B cell (primary cell): ENCODE measurements at regions of chr19 and their contacts with region 1.

Region 1: GRCh38 chr19:16259385-16260159 is 61.9 kb downstream of the AP1M1 start:
- DNase-seq: peak; percentile 94
- ATAC-seq: peak; percentile 79
- H3K4me3 ChIP-seq: peak overlapping the region in 1 of 5 experiments; percentile 42
- H3K4me3 Mint-ChIP-seq: peak overlapping the region; percentile 78
- H3K27ac ChIP-seq: peak overlapping the region; percentile 87 to 89
- H3K27ac Mint-ChIP-seq: peak overlapping the region; percentile 95
- H3K4me1 ChIP-seq: peaks cover 75 to 94% of the 10 kb centered on the region in 2 donors
- H3K4me1 Mint-ChIP-seq: peaks cover 83% of the 10 kb centered on the region
- H3K27me3 ChIP-seq: no peaks in the 10 kb centered on the region
- H3K27me3 Mint-ChIP-seq: no peaks in the 10 kb centered on the region
- CTCF ChIP-seq: no peak

Region 2: DNA sequence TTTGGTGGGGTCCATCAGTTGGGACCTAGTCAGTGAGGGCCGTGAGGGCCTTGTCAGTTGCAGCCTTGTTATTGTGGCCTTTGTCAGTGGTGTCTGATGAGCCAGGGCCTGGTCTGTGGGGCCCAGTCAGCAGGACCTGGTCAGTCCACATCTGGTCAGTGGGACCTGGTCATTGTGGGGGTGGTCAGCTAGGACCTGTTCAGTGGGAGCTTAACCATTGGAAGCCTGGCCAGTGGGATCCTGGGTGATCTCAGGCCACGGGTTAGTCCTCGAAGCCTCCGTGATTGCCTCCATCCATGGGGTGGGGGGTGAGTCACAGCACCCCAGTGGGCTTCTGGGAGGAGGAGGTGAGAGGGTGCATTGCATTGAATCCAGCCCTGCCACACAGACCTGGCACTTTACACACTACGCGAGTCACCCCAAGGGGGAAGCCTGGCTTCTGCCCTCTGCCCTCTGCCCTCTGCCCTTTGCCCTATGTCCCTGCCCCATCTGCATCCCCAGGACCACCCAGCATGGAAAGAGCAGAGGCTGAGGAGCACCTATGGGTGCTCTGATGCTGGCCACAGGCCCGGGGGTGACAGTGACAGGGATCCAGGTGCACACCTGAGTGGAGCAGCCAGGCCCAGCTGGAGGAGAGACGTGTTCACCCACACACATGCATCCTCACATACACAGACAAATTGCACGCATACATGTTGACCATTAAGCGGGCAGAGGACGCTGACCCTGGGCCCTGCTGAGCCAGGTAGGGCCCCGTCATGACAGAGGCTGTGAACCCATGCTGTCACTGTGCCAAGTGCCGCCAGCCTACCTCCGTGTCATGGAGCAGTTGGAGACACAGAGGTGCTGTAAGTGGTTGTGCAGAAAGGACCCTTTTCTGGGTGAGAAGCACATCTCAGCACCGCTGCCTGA is 243.1 kb before region 1 on chr19:
- CTCF ChIA-PET with region 1: no interaction called
- POLR2A ChIA-PET with region 1: no interaction called
- intact Hi-C with region 1: no loop called
- DNase-seq: peak; percentile 4
- ATAC-seq: no peak
- H3K4me3 ChIP-seq: no peak overlapping the region
- H3K4me3 Mint-ChIP-seq: no peak overlapping the region
- H3K27ac ChIP-seq: no peak overlapping the region
- H3K27ac Mint-ChIP-seq: no peak overlapping the region
- H3K4me1 ChIP-seq: no peaks in the 10 kb centered on the region
- H3K4me1 Mint-ChIP-seq: no peaks in the 10 kb centered on the region
- H3K27me3 ChIP-seq: no peaks in the 10 kb centered on the region
- H3K27me3 Mint-ChIP-seq: no peaks in the 10 kb centered on the region
- CTCF ChIP-seq: no peak

Region 3: DNA sequence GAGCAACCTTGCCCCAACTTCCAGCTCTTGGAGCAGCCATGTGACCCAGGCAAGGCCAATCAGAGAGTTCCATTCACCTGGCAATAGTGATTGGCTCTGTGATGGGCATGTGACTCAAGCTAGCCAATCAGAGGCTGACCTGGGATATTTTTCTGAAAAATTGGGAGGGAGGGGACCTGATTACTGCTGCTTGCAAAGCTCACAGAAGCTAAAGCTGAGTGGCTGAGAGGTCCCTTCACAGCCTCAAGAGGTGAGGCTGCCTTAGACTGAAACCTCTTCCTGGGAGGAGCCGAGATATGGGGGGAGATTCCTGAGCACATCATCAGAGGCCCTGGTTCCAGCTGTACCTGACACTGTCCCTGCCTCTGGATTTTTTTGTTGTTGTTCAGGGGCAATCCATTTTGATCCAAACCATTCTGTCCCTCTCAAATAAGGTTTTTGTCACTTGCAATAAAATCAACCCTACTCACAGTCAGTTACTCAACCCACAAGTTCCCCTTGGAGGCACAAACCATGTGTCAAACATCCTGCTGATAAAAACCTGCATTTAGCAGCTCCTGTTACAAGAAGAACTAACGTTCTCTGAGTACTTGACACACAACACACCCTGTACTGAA is 91.0 kb before region 1 on chr19:
- CTCF ChIA-PET with region 1: no interaction called
- POLR2A ChIA-PET with region 1: no interaction called
- intact Hi-C with region 1: no loop called
- DNase-seq: no peak
- ATAC-seq: no peak
- H3K4me3 ChIP-seq: peak overlapping the region in 1 of 5 experiments; percentile 13
- H3K4me3 Mint-ChIP-seq: peak overlapping the region; percentile 19
- H3K27ac ChIP-seq: peak overlapping the region in 1 of 2 donors; percentile 32
- H3K27ac Mint-ChIP-seq: peak overlapping the region; percentile 46
- H3K4me1 ChIP-seq: peaks cover 15 to 28% of the 10 kb centered on the region in 2 donors
- H3K4me1 Mint-ChIP-seq: peaks cover 15% of the 10 kb centered on the region
- H3K27me3 ChIP-seq: no peaks in the 10 kb centered on the region
- H3K27me3 Mint-ChIP-seq: no peaks in the 10 kb centered on the region
- CTCF ChIP-seq: no peak

Region 4: DNA sequence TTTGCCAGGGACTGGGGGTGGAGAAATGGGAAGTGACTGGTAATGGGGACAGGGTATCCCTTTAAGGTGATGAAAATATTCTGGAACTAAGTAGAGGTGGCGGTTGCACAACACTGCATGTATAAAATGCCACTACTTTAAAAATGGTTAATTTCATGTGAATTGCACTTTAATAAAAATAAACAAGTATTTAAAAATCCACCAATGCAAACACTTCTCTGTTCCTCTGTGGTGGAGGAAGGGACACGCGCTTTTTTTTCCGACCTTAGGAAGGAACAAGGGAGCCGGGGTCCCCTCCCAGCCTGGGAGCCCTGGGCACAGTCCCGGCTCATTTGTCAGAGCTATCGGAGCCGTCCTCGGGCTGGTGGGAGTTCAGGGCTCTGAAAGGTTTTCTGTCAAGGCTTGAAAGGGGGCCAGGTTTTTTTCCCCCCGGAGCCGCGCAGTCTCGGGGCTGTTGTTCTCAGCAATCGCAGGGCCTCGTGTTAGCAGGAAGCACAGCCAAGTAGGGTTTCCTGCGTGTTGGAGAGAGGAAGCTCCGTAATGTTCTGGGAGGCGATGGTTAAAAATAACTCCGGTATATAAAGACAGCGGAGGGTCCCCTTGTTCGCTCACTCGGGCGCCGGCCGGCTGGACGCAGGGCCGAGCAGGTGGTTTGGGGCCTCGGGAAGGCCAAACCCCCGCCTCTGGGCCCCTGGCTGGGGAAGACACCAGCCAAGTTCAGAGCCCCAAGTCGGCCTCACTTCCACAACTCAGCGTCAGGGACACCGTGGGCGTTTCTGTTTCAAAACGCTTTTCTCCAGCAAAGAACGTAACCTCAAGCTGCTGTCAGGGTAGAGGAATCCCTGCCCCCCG is 23.9 kb after region 1 on chr19:
- CTCF ChIA-PET with region 1: interaction called, 3 read pairs
- POLR2A ChIA-PET with region 1: interaction called, 4 read pairs
- intact Hi-C with region 1: loop called (anchors 2 kb)
- DNase-seq: peak; percentile 66
- ATAC-seq: peak; percentile 69
- H3K4me3 ChIP-seq: peak overlapping the region; percentile 9 to 68 (median 30)
- H3K4me3 Mint-ChIP-seq: peak overlapping the region; percentile 77
- H3K27ac ChIP-seq: peak overlapping the region; percentile 51 to 73
- H3K27ac Mint-ChIP-seq: peak overlapping the region; percentile 82
- H3K4me1 ChIP-seq: peaks cover 37 to 45% of the 10 kb centered on the region in 2 donors
- H3K4me1 Mint-ChIP-seq: peaks cover 51% of the 10 kb centered on the region
- H3K27me3 ChIP-seq: no peaks in the 10 kb centered on the region
- H3K27me3 Mint-ChIP-seq: no peaks in the 10 kb centered on the region
- CTCF ChIP-seq: no peak

Region 5: GRCh38 chr19:16301999-16302694 is 42.6 kb after region 1 on chr19:
- CTCF ChIA-PET with region 1: no interaction called
- POLR2A ChIA-PET with region 1: no interaction called
- intact Hi-C with region 1: loop called (anchors 1 kb)
- DNase-seq: peak; percentile 46
- ATAC-seq: peak; percentile 78
- H3K4me3 ChIP-seq: no peak overlapping the region
- H3K4me3 Mint-ChIP-seq: peak overlapping the region; percentile 33
- H3K27ac ChIP-seq: peak overlapping the region; percentile 44 to 48
- H3K27ac Mint-ChIP-seq: peak overlapping the region; percentile 76
- H3K4me1 ChIP-seq: peaks cover 0 to 15% of the 10 kb centered on the region in 2 donors
- H3K4me1 Mint-ChIP-seq: peaks cover 13% of the 10 kb centered on the region
- H3K27me3 ChIP-seq: no peaks in the 10 kb centered on the region
- H3K27me3 Mint-ChIP-seq: no peaks in the 10 kb centered on the region
- CTCF ChIP-seq: no peak